PC-9 (cell line): ENCODE measurements at regions of chr14 and their contacts with region 1.

Region 1: DNA sequence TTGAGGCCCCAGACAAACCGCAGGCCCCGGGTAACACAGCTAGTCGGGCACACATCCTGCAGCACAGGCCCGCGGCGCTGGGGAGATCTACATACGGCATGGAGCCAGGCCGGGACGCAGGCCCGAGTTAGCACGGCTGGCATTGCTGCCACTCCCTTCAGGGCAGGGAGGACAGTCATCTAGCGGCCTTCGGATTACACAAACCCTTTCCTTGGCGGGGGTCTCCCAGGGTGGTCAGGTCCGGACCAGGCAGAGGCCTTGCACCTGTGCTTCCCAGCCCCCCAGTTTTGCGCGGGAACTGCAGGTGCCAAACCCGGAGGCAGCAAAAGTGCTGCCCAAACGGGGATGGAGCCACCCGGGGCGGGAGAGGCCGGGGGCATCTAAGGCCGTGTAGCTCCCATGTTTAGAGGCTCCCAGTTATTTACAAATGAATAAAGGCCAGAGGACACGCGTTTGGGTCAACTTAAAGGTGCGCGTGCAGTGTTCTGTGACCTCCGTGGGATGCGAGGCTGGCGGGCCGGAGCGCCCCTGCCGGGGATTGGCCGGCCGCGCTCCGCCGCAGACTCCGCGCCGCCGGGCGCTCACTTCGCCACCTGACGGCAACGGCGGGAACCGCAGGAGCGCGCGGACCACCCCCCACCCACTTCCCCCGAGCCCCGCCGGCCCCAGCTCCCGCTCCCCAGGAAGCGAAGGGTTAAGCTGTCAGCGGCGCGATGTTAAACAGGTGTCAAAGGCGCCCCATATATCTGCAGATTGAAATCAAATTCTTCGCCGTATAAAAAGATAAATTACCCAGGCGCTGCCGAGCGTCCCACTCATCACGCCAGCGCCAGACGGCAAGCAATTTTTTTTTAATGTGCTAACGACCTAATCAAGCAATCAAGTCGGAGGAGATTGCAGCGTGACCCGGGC is 18.1 kb downstream of the VSX2 start:
- DNase-seq: peak in 1 of 2 experiments; percentile 58
- H3K4me3 ChIP-seq: peak overlapping the region; percentile 76
- H3K27ac ChIP-seq: no peak overlapping the region
- H3K4me1 ChIP-seq: 0 out of 2 replicates have a peak, but pooled peaks cover 6% of the 10 kb centered on the region
- H3K27me3 ChIP-seq: peaks cover 22% of the 10 kb centered on the region
- CTCF ChIP-seq: peak; percentile 89

Region 2: GRCh38 chr14:74141703-74142102 is 115.6 kb before region 1 on chr14:
- CTCF ChIA-PET with region 1: no interaction called
- POLR2A ChIA-PET with region 1: no interaction called
- intact Hi-C with region 1: no loop called
- DNase-seq: no peak
- H3K4me3 ChIP-seq: no peak overlapping the region
- H3K27ac ChIP-seq: no peak overlapping the region
- H3K4me1 ChIP-seq: no peaks in the 10 kb centered on the region
- H3K27me3 ChIP-seq: no peaks in the 10 kb centered on the region
- CTCF ChIP-seq: no peak

Region 3: GRCh38 chr14:74217672-74218448 is 39.5 kb before region 1 on chr14:
- CTCF ChIA-PET with region 1: interaction called, 13 read pairs
- POLR2A ChIA-PET with region 1: no interaction called
- intact Hi-C with region 1: no loop called
- DNase-seq: peak; percentile 58 to 92
- H3K4me3 ChIP-seq: peak overlapping the region; percentile 10; the same call in 1 of the 2 replicates
- H3K27ac ChIP-seq: no peak overlapping the region
- H3K4me1 ChIP-seq: no peaks in the 10 kb centered on the region
- H3K27me3 ChIP-seq: peaks cover 40% of the 10 kb centered on the region
- CTCF ChIP-seq: peak; percentile 96

Region 4: DNA sequence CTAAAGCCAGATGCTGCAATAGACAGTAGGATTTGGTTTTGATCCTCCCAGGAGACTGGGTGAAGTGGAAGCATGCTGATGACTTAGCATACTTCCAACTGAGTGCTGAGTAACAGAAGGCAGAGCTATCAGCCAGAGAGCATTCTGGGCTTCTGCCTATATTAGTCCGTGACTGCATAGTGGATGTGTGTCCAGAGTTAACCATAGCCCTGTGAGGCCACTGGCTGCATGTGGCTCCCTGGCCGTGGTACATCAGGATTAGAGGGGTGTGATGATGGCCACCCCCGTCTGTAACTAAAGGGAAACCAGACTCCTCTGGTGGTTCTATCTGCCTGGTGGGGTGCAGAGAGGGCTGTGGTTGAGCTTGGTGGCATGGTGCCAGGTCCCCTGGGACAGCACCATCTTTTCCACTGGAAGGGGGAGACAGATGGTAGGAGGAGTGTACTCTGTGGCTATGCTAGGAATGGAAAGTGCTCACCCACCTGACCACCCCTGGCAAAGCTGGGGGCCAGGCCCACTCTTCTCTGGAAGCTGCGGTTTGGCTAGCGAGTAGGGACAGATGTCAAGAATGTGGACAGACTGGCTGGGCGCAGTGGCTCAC is 18.0 kb after region 1 on chr14:
- CTCF ChIA-PET with region 1: interaction called, 6 read pairs
- POLR2A ChIA-PET with region 1: no interaction called
- intact Hi-C with region 1: loop called (anchors 1 kb)
- DNase-seq: peak; percentile 91 to 99
- H3K4me3 ChIP-seq: no peak overlapping the region
- H3K27ac ChIP-seq: peak overlapping the region; percentile 77
- H3K4me1 ChIP-seq: peaks cover 23% of the 10 kb centered on the region
- H3K27me3 ChIP-seq: no peaks in the 10 kb centered on the region
- CTCF ChIP-seq: no peak